ENCODE measurements at regions of chr18 and their contacts with region 1.

Region 1: GRCh38 chr18:70132999-70133398 is 72.5 kb downstream of the RTTN start:
- DNase-seq: peak; percentile 86
- H3K4me3 ChIP-seq: peak overlapping the region; percentile 2; the same call in 1 of the 2 replicates
- H3K27ac ChIP-seq: peak overlapping the region; percentile 62
- H3K27me3 ChIP-seq: no peaks in the 10 kb centered on the region
- CTCF ChIP-seq: no peak

Region 2: GRCh38 chr18:70107091-70107490 is 25.9 kb before region 1 on chr18:
- CTCF ChIA-PET with region 1: no interaction called
- POLR2A ChIA-PET with region 1: no interaction called
- DNase-seq: no peak
- H3K4me3 ChIP-seq: no peak overlapping the region
- H3K27ac ChIP-seq: no peak overlapping the region
- H3K27me3 ChIP-seq: no peaks in the 10 kb centered on the region
- CTCF ChIP-seq: no peak

Region 3: GRCh38 chr18:70154591-70155194 is 21.7 kb after region 1 on chr18:
- CTCF ChIA-PET with region 1: no interaction called
- POLR2A ChIA-PET with region 1: interaction called, 15 read pairs
- DNase-seq: peak; percentile 78
- H3K4me3 ChIP-seq: no peak overlapping the region
- H3K27ac ChIP-seq: no peak overlapping the region
- H3K27me3 ChIP-seq: no peaks in the 10 kb centered on the region
- CTCF ChIP-seq: no peak

Measured in AG04450 (cell line).